A673 (cell line): ENCODE measurements at regions of chr5 and their contacts with region 1.

Region 1: DNA sequence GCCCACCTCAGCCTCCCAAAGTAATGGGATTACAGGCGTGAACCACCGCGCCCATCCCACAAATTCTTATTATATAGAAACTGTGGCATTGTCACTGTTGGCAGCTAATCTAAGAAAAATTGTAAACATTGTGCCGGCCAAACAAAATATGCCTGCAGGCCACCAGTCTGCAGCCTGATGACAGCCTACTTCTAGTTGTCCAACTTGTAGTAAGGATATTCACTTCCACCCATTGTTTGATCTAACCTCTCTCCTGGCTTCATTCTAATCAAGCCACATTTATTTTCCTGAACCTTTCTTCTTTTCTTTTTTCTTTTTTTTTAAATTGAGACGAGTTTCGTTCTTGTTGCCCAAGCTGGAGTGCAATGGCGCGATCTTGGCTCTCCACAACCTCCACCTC is 13.7 kb upstream of the TMED9 start:
- DNase-seq: no peak
- H3K4me3 ChIP-seq: no peak overlapping the region
- H3K27ac ChIP-seq: no peak overlapping the region
- H3K4me1 ChIP-seq: no peaks in the 10 kb centered on the region
- H3K27me3 ChIP-seq: no peaks in the 10 kb centered on the region
- CTCF ChIP-seq: no peak

Region 2: GRCh38 chr5:177546258-177546741 is 32.0 kb before region 1 on chr5:
- CTCF ChIA-PET with region 1: no interaction called
- POLR2A ChIA-PET with region 1: interaction called, 10 read pairs
- intact Hi-C with region 1: no loop called
- DNase-seq: peak; percentile 79
- H3K4me3 ChIP-seq: no peak overlapping the region
- H3K27ac ChIP-seq: peak overlapping the region; percentile 75
- H3K4me1 ChIP-seq: peaks cover 20% of the 10 kb centered on the region
- H3K27me3 ChIP-seq: no peaks in the 10 kb centered on the region
- CTCF ChIP-seq: no peak

Region 3: GRCh38 chr5:177997307-177997670 is 419.0 kb after region 1 on chr5:
- CTCF ChIA-PET with region 1: no interaction called
- POLR2A ChIA-PET with region 1: no interaction called
- intact Hi-C with region 1: no loop called
- DNase-seq: no peak
- H3K4me3 ChIP-seq: no peak overlapping the region
- H3K27ac ChIP-seq: no peak overlapping the region
- H3K4me1 ChIP-seq: no peaks in the 10 kb centered on the region
- H3K27me3 ChIP-seq: peaks cover 10% of the 10 kb centered on the region
- CTCF ChIP-seq: no peak

Region 4: GRCh38 chr5:179422213-179422855 is 1844.0 kb after region 1 on chr5:
- CTCF ChIA-PET with region 1: no interaction called
- POLR2A ChIA-PET with region 1: no interaction called
- intact Hi-C with region 1: no loop called
- DNase-seq: peak; percentile 83
- H3K4me3 ChIP-seq: no peak overlapping the region
- H3K27ac ChIP-seq: no peak overlapping the region
- H3K4me1 ChIP-seq: peaks cover 19% of the 10 kb centered on the region
- H3K27me3 ChIP-seq: no peaks in the 10 kb centered on the region
- CTCF ChIP-seq: no peak